ENCODE measurements at regions of chr6 and their contacts with region 1.

Region 1: GRCh38 chr6:44662461-44663121 is 275.1 kb downstream of the CDC5L start:
- DNase-seq: no peak
- H3K4me3 ChIP-seq: no peak overlapping the region
- H3K27ac ChIP-seq: no peak overlapping the region
- H3K4me1 ChIP-seq: peaks cover 40% of the 10 kb centered on the region
- H3K27me3 ChIP-seq: no peaks in the 10 kb centered on the region
- CTCF ChIP-seq: no peak

Region 2: GRCh38 chr6:44674351-44675155 is 12.0 kb after region 1 on chr6:
- CTCF ChIA-PET with region 1: no interaction called
- dilution Hi-C with region 1: no loop called
- in situ Hi-C with region 1: no loop called
- intact Hi-C with region 1: loop called (anchors 1 kb)
- DNase-seq: peak; percentile 93
- H3K4me3 ChIP-seq: no peak overlapping the region
- H3K27ac ChIP-seq: peak overlapping the region; percentile 41
- H3K4me1 ChIP-seq: peaks cover 37% of the 10 kb centered on the region
- H3K27me3 ChIP-seq: no peaks in the 10 kb centered on the region
- CTCF ChIP-seq: no peak

Region 3: GRCh38 chr6:45075246-45075645 is 412.7 kb after region 1 on chr6:
- CTCF ChIA-PET with region 1: no interaction called
- dilution Hi-C with region 1: no loop called
- in situ Hi-C with region 1: no loop called
- intact Hi-C with region 1: loop called (anchors 5 kb)
- DNase-seq: peak; percentile 96
- H3K4me3 ChIP-seq: no peak overlapping the region
- H3K27ac ChIP-seq: peak overlapping the region; percentile 95
- H3K4me1 ChIP-seq: peaks cover 13% of the 10 kb centered on the region
- H3K27me3 ChIP-seq: no peaks in the 10 kb centered on the region
- CTCF ChIP-seq: no peak